ENCODE measurements at regions of chr5 and their contacts with region 1.

Region 1: DNA sequence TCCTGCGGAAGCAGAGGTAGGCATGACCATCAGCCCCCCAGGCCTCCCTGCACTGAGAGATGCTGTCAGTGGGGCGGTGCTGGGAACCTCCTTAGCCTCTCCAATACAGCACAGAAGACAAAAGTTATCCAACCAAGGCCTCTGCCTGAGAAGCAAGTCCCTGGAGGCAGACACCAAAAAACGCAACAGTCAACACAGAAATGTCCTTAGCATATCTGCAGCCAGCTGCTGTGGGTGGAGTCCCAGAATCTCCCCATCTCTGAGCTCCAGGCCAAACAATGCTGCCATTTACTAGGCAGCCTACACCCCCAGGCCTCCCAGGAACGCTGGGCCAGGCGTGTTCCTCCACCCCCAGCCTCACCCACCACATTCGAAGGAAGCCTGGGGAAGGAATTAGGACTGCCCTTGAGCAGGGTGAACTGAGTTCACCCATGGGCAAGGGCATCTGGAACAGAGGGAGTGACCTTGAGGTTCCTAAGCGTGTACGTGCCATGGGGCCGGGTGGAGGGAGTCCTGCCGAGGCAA is 43.7 kb downstream of the STK10 start:
- DNase-seq: no peak
- ATAC-seq: no peak
- H3K4me3 ChIP-seq: no peak overlapping the region
- H3K4me3 Mint-ChIP-seq: no peak overlapping the region
- H3K27ac ChIP-seq: peak overlapping the region in 1 of 2 experiments; percentile 47
- H3K27ac Mint-ChIP-seq: peak overlapping the region; percentile 90
- H3K4me1 ChIP-seq: peaks cover 90% of the 10 kb centered on the region
- H3K4me1 Mint-ChIP-seq: peaks cover 93% of the 10 kb centered on the region
- H3K27me3 ChIP-seq: no peaks in the 10 kb centered on the region
- H3K27me3 Mint-ChIP-seq: no peaks in the 10 kb centered on the region
- CTCF ChIP-seq: no peak

Region 2: DNA sequence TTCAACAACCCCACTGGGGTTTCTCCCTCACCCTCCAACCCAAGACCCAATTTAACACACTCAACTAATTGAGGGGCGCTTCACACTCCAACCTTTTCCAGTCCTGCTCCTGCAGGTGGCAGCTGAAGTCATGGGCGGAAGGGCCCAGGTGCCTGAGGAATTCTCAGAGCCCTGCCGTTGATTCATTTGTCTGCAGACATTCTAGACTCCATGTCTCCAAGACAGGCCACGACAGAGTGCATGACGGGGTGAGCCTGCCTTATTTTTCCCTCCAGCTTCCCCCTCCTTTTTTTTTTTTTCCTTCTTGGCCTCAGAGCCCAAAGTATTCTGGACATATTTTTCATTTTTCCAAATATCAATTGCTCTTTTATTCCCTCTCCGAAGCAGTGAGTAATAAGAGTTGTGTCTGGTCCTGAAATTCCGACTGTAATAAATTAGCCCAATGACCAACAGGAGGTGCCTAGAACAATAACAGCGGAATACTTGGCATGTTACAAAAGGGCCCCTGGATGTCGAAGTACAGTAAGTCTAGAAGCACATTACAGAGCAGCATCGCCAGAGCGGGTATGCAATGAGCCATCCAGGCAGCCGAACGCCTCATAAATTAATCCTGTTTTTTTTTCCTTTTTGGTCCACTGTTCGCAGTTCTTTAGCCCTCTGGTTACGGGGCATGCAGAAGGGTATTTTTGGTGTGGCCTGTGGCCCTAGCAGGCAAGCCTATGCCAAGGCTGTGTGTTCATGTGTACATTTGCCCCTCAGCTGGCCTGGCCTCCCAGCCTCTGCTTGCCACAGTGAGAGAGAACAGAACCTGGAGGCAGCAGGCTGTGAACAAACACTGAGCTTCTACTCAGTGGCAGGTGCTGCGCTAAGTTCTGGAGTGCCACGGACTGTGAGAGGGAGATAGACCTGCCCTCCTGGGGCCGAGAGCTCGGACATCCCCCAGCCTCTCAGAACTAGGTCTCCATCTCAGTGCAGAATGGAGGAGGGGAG is 367.3 kb before region 1 on chr5:
- CTCF ChIA-PET with region 1: no interaction called
- POLR2A ChIA-PET with region 1: no interaction called
- intact Hi-C with region 1: no loop called
- DNase-seq: no peak
- ATAC-seq: no peak
- H3K4me3 ChIP-seq: no peak overlapping the region
- H3K4me3 Mint-ChIP-seq: no peak overlapping the region
- H3K27ac ChIP-seq: no peak overlapping the region
- H3K27ac Mint-ChIP-seq: no peak overlapping the region
- H3K4me1 ChIP-seq: no peaks in the 10 kb centered on the region
- H3K4me1 Mint-ChIP-seq: no peaks in the 10 kb centered on the region
- H3K27me3 ChIP-seq: peaks cover 0 to 2% of the 10 kb centered on the region in 2 experiments
- H3K27me3 Mint-ChIP-seq: peaks cover 9% of the 10 kb centered on the region
- CTCF ChIP-seq: no peak

Region 3: GRCh38 chr5:172133359-172134029 is 10.9 kb before region 1 on chr5:
- CTCF ChIA-PET with region 1: no interaction called
- POLR2A ChIA-PET with region 1: no interaction called
- intact Hi-C with region 1: loop called in 1 of 2 experiments (anchors 2 kb)
- DNase-seq: peak in 6 of 9 experiments; percentile 21 to 76 (median 52)
- ATAC-seq: peak; percentile 85
- H3K4me3 ChIP-seq: no peak overlapping the region
- H3K4me3 Mint-ChIP-seq: peak overlapping the region; percentile 58
- H3K27ac ChIP-seq: peak overlapping the region; percentile 1 to 70
- H3K27ac Mint-ChIP-seq: peak overlapping the region; percentile 95
- H3K4me1 ChIP-seq: peaks cover 31% of the 10 kb centered on the region
- H3K4me1 Mint-ChIP-seq: peaks cover 71% of the 10 kb centered on the region
- H3K27me3 ChIP-seq: no peaks in the 10 kb centered on the region
- H3K27me3 Mint-ChIP-seq: no peaks in the 10 kb centered on the region
- CTCF ChIP-seq: no peak

Measured in CD8-positive, alpha-beta T cell (primary cell).